ENCODE measurements at regions of chr1 and their contacts with region 1.

Region 1: GRCh38 chr1:37323486-37324377 is 150.6 kb upstream of the ZC3H12A start:
- DNase-seq: peak; percentile 32
- H3K4me3 ChIP-seq: no peak overlapping the region
- H3K27ac ChIP-seq: no peak overlapping the region
- H3K4me1 ChIP-seq: no peaks in the 10 kb centered on the region
- H3K27me3 ChIP-seq: peaks cover 0 to 3% of the 10 kb centered on the region in 2 experiments
- CTCF ChIP-seq: peak; percentile 67 to 75
- POLR2A ChIP-seq: no peak

Region 2: DNA sequence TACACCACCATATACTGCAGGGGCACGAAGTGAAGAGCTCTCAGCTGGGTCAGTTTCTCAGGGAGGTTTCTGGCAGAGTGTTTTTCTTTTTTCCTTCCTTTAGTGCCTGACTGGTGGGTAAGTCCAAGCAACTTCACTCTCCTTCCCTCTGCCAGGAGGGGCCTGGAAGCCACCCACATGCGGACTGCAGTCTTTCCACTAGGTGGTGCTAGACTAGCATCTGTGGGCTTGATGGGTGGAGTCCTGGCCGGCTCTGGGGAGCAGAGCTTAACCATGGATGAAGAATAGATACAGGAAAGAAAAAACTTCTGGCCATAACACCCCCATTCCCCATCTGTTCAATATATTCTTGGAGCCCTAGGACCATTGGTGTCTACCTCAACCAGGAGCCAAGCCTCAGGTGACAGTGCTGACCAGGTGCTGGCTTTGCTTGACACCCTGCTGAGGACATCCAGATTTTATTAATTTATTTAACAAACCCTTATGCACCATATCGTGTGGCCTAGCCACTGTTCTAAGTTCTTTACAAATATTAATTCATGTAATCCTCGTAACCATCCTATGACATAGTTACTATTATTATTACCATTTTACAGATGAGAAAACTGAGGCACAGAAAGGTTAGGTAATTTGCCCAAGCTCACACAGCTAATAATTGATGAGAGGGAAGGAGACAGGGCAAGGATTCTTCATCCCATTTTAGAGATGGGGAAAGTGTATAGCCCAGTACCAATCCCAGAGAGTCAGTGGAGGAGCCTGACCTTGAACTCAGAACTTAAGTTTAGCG is 714.3 kb before region 1 on chr1:
- CTCF ChIA-PET with region 1: interaction called, 15 read pairs
- POLR2A ChIA-PET with region 1: no interaction called
- dilution Hi-C with region 1: no loop called
- intact Hi-C with region 1: loop called (anchors 1 kb)
- DNase-seq: peak; percentile 31
- H3K4me3 ChIP-seq: no peak overlapping the region
- H3K27ac ChIP-seq: no peak overlapping the region
- H3K4me1 ChIP-seq: no peaks in the 10 kb centered on the region
- H3K27me3 ChIP-seq: no peaks in the 10 kb centered on the region
- CTCF ChIP-seq: peak; percentile 66
- POLR2A ChIP-seq: no peak

Region 3: GRCh38 chr1:36807262-36807661 is 516.5 kb before region 1 on chr1:
- CTCF ChIA-PET with region 1: no interaction called
- POLR2A ChIA-PET with region 1: no interaction called
- dilution Hi-C with region 1: no loop called
- intact Hi-C with region 1: loop called (anchors 10 kb)
- DNase-seq: no peak
- H3K4me3 ChIP-seq: no peak overlapping the region
- H3K27ac ChIP-seq: no peak overlapping the region
- H3K4me1 ChIP-seq: peaks cover 9% of the 10 kb centered on the region
- H3K27me3 ChIP-seq: peaks cover 0 to 6% of the 10 kb centered on the region in 2 experiments
- CTCF ChIP-seq: no peak
- POLR2A ChIP-seq: no peak

Region 4: GRCh38 chr1:37096466-37096865 is 227.3 kb before region 1 on chr1:
- CTCF ChIA-PET with region 1: no interaction called
- POLR2A ChIA-PET with region 1: no interaction called
- dilution Hi-C with region 1: no loop called
- intact Hi-C with region 1: loop called (anchors 2 kb)
- DNase-seq: peak; percentile 2
- H3K4me3 ChIP-seq: no peak overlapping the region
- H3K27ac ChIP-seq: no peak overlapping the region
- H3K4me1 ChIP-seq: no peaks in the 10 kb centered on the region
- H3K27me3 ChIP-seq: no peaks in the 10 kb centered on the region
- CTCF ChIP-seq: peak in 1 of 2 donors; percentile 23
- POLR2A ChIP-seq: no peak